Activated CD4-positive, alpha-beta memory T cell treated with anti-CD3 and anti-CD28 coated beads for 36 hours (primary cell): ENCODE measurements at regions of chr13 and their contacts with region 1.

Region 1: DNA sequence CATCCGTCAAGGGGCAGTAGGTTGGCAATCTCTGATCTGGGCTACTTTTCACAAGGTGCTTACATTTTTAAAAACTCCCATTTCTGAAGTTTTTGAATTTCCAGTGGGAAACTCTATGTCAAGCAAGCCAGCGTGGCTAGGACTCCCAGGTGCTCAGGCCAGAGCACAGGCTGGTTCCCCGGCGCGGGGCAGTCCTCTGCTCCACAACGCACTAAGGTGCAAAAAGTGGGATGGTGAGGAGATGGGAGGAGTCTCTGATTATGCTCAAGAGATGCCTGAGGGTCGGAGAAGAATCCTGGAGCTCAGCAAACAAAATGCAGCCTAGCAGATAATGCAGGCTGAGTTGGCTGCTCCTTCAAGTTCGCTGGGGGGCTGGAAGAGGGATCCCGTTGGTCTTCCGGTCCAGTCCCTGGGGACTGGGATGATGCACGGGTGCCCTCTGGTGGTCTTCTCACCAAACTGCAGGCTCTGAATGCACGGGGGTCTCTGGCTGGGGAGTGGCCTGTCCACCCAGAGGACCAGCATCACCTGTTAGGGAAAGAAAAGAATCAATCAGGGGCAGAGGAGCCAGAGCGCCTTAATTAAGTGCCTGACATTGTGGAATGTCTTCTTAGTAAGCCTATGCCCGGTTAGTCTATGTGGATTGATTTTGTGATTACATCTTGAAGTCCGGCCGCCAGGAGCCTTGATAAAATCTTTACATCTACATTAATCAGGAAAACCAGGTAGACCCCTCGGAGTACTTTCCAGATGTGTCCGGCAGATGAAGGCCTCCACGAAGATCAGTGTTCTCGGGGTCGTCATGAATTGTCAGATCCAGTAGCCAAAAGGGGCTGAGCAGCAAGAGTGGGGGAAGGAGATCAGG is 244.4 kb upstream of the MAB21L1 start:
- DNase-seq: peak; percentile 51
- H3K4me3 Mint-ChIP-seq: no peak overlapping the region
- H3K27ac Mint-ChIP-seq: no peak overlapping the region
- H3K4me1 Mint-ChIP-seq: no peaks in the 10 kb centered on the region
- H3K27me3 Mint-ChIP-seq: peaks cover 7% of the 10 kb centered on the region

Region 2: GRCh38 chr13:35630551-35631275 is 90.2 kb before region 1 on chr13:
- CTCF ChIA-PET with region 1: no interaction called
- POLR2A ChIA-PET with region 1: no interaction called
- intact Hi-C with region 1: loop called (anchors 5 kb)
- DNase-seq: no peak
- H3K4me3 Mint-ChIP-seq: no peak overlapping the region
- H3K27ac Mint-ChIP-seq: no peak overlapping the region
- H3K4me1 Mint-ChIP-seq: no peaks in the 10 kb centered on the region
- H3K27me3 Mint-ChIP-seq: no peaks in the 10 kb centered on the region

Region 3: DNA sequence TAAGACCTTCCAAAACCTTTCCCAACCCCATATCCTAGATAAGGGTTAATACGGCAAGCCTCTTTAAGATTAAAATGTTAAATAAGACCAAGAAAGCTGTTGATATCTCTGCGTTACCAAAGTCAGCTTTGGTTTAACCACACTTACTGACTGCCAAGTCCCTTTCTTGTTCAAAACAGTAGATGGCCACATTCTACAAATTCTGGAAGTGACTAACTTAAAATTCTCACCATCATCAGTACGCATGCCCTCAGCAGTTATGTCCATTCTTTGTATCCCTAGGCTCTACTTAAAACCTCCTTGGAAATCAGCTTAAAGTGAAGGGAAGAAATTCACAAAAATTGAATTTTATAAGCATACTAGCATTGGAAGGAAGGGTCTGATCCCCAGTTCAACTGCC is 469.8 kb after region 1 on chr13:
- CTCF ChIA-PET with region 1: no interaction called
- POLR2A ChIA-PET with region 1: no interaction called
- intact Hi-C with region 1: no loop called
- DNase-seq: no peak
- H3K4me3 Mint-ChIP-seq: no peak overlapping the region
- H3K27ac Mint-ChIP-seq: no peak overlapping the region
- H3K4me1 Mint-ChIP-seq: no peaks in the 10 kb centered on the region
- H3K27me3 Mint-ChIP-seq: no peaks in the 10 kb centered on the region